ENCODE measurements at regions of chr11 and their contacts with region 1.

Region 1: GRCh38 chr11:45110562-45110961 is 35.9 kb upstream of the PRDM11 start:
- DNase-seq: peak; percentile 76
- H3K4me3 ChIP-seq: peak overlapping the region in 1 of 2 experiments; percentile 20; a peak in 1 of 4 replicates
- H3K27ac ChIP-seq: no peak overlapping the region
- H3K4me1 ChIP-seq: no peaks in the 10 kb centered on the region
- H3K27me3 ChIP-seq: peaks cover 18% of the 10 kb centered on the region; the same call in 1 of the 2 replicates
- CTCF ChIP-seq: peak; percentile 75
- EP300 ChIP-seq: no peak
- RAD21 ChIP-seq: peak; percentile 95

Region 2: DNA sequence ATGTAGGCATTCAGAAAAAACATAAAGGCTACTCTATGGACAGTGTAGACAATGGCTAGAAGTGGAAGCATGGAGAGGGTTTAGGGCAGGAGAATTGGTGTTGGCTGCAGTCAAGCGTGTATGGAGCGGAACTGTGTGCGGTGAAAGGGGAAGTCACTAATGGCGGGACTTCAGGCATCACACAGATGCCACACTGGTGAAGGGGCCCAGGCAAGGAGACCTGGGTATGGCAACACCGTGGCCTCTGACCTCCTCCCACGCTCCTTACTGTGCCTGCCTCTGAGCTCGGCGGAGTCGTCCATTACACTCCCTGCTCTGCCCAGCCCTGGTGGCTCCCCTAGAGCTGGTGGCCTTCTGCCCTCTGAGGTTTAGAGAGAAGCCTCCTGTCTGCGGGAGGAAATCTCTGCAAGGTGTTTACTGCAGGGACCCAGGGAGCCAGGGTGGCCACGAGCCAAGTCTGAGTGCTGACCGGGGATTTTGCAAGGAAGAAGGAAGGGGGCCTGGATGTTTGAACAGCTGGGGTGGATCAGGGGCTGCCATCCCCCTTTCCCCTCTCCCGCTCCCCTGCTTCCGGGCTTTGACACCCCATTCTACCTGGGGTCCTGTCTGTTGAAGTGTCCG is 458.9 kb before region 1 on chr11:
- CTCF ChIA-PET with region 1: no interaction called
- POLR2A ChIA-PET with region 1: no interaction called
- DNase-seq: no peak
- H3K4me3 ChIP-seq: no peak overlapping the region
- H3K27ac ChIP-seq: no peak overlapping the region
- H3K4me1 ChIP-seq: no peaks in the 10 kb centered on the region; a peak in 1 of 4 replicates
- H3K27me3 ChIP-seq: peaks cover 39% of the 10 kb centered on the region
- CTCF ChIP-seq: no peak
- EP300 ChIP-seq: no peak
- RAD21 ChIP-seq: no peak

Region 3: DNA sequence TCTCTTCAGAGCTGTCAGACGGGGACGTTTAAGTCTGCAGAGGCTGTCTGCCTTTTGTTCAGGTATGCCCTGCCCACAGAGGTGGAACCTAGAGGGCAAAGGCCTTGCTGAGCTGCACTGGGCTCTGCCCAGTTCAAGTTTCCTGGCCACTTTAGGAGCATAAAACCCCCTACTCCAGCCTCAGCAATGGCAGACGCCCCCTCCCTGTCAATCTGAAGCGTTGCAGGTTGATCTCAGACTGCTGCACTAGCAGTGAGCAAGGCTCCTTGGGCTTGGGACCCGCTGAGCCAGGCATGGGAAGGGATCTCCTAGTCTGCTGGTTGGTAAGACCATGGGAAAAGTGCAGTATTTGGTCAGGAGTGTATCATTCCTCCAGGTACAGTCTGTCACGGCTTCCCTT is 93.2 kb before region 1 on chr11:
- CTCF ChIA-PET with region 1: no interaction called
- POLR2A ChIA-PET with region 1: no interaction called
- DNase-seq: no peak
- H3K4me3 ChIP-seq: no peak overlapping the region
- H3K27ac ChIP-seq: no peak overlapping the region
- H3K4me1 ChIP-seq: peaks cover 0 to 7% of the 10 kb centered on the region in 2 experiments; a peak in 1 of 4 replicates
- H3K27me3 ChIP-seq: peaks cover 13% of the 10 kb centered on the region; the same call in 1 of the 2 replicates
- CTCF ChIP-seq: no peak
- EP300 ChIP-seq: no peak
- RAD21 ChIP-seq: no peak

Region 4: GRCh38 chr11:45133871-45134270 is 23.3 kb after region 1 on chr11:
- CTCF ChIA-PET with region 1: interaction called, 17 read pairs
- POLR2A ChIA-PET with region 1: no interaction called
- DNase-seq: no peak
- H3K4me3 ChIP-seq: no peak overlapping the region
- H3K27ac ChIP-seq: no peak overlapping the region
- H3K4me1 ChIP-seq: no peaks in the 10 kb centered on the region
- H3K27me3 ChIP-seq: peaks cover 18% of the 10 kb centered on the region
- CTCF ChIP-seq: no peak
- EP300 ChIP-seq: no peak
- RAD21 ChIP-seq: no peak

Region 5: GRCh38 chr11:45223496-45223895 is 112.9 kb after region 1 on chr11:
- CTCF ChIA-PET with region 1: interaction called, 10 read pairs
- POLR2A ChIA-PET with region 1: no interaction called
- DNase-seq: no peak
- H3K4me3 ChIP-seq: no peak overlapping the region
- H3K27ac ChIP-seq: no peak overlapping the region
- H3K4me1 ChIP-seq: no peaks in the 10 kb centered on the region
- H3K27me3 ChIP-seq: no peaks in the 10 kb centered on the region
- CTCF ChIP-seq: no peak
- EP300 ChIP-seq: no peak
- RAD21 ChIP-seq: no peak

Region 6: GRCh38 chr11:45245218-45246045 is 134.9 kb after region 1 on chr11:
- CTCF ChIA-PET with region 1: interaction called, 18 read pairs
- POLR2A ChIA-PET with region 1: no interaction called
- DNase-seq: no peak
- H3K4me3 ChIP-seq: no peak overlapping the region
- H3K27ac ChIP-seq: no peak overlapping the region
- H3K4me1 ChIP-seq: peaks cover 0 to 6% of the 10 kb centered on the region in 2 experiments; a peak in 1 of 4 replicates
- H3K27me3 ChIP-seq: 0 out of 2 replicates have a peak, but pooled peaks cover 7% of the 10 kb centered on the region
- CTCF ChIP-seq: no peak
- EP300 ChIP-seq: no peak
- RAD21 ChIP-seq: no peak

Region 7: GRCh38 chr11:45275828-45276227 is 165.3 kb after region 1 on chr11:
- CTCF ChIA-PET with region 1: interaction called, 10 read pairs
- POLR2A ChIA-PET with region 1: no interaction called
- DNase-seq: no peak
- H3K4me3 ChIP-seq: no peak overlapping the region
- H3K27ac ChIP-seq: no peak overlapping the region
- H3K4me1 ChIP-seq: no peaks in the 10 kb centered on the region; a peak in 1 of 4 replicates
- H3K27me3 ChIP-seq: peaks cover 6% of the 10 kb centered on the region; the same call in 1 of the 2 replicates
- CTCF ChIP-seq: no peak
- EP300 ChIP-seq: no peak
- RAD21 ChIP-seq: no peak

Region 8: DNA sequence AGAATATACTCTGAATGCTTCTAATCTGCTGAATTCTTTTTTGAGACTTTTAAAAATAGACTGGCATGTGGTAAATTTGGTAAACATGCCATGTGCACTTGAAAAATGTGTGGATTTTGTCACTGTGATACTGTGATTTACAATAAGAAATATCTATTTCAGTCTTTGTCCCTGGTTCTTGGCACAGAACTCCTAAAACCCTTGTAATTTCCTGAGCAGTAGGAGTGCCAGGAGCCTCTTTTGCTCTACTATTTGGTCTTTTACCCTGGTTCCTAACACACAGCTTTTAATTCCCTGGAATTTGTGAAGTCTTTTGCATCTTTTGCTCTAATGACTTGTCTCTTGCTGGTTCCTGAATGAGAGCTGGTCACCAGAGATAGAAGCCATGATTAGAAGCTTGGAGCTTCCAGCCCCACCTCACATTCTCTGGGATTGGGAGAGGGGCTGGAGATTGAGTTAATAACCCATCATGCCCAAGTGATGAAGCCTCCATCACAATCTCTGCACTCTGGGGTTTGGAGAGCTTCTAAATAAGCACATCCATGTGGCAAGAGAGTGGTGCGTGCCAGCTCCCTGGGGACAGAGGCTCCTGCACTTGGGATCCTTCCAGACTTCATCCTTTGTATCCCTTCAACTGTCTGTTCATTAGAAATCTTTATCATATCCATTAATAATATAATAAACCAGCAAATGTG is 202.8 kb after region 1 on chr11:
- CTCF ChIA-PET with region 1: interaction called, 35 read pairs
- POLR2A ChIA-PET with region 1: no interaction called
- DNase-seq: no peak
- H3K4me3 ChIP-seq: no peak overlapping the region
- H3K27ac ChIP-seq: no peak overlapping the region
- H3K4me1 ChIP-seq: no peaks in the 10 kb centered on the region
- H3K27me3 ChIP-seq: no peaks in the 10 kb centered on the region; the same call in 1 of the 2 replicates
- CTCF ChIP-seq: no peak
- EP300 ChIP-seq: no peak
- RAD21 ChIP-seq: no peak

Measured in SK-N-SH (cell line).